ENCODE measurements at regions of chr1 and their contacts with region 1.

Region 1: GRCh38 chr1:160006312-160006940 is 25.4 kb downstream of the PIGM start:
- DNase-seq: peak; percentile 84
- H3K27ac ChIP-seq: no peak overlapping the region
- CTCF ChIP-seq: peak; percentile 94

Region 2: DNA sequence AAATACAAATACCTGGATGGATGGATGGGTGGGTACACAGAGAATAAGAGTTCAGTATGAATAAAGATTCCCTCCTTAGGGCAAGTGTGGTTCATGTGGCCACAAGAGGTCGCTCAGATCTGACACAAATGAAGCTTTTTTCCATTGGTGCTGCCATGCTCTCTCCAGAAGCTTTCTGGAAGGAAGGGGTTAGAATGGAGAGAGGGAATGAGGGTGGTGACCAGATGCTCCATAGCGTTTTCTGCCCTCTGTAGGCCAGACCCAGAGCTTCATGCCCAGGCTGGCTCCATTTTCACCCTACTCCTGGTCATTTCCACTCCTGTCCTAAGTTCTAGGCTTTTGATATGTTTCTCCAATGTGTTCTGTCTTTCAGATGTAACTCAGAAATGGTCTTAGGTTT is 207.5 kb before region 1 on chr1:
- CTCF ChIA-PET with region 1: interaction called, 16 read pairs
- POLR2A ChIA-PET with region 1: no interaction called
- DNase-seq: peak; percentile 69
- H3K27ac ChIP-seq: no peak overlapping the region
- CTCF ChIP-seq: peak; percentile 71

Region 3: GRCh38 chr1:159891275-159892157 is 114.9 kb before region 1 on chr1:
- CTCF ChIA-PET with region 1: interaction called, 46 read pairs
- POLR2A ChIA-PET with region 1: no interaction called
- DNase-seq: peak; percentile 80
- H3K27ac ChIP-seq: peak overlapping the region; percentile 90
- CTCF ChIP-seq: peak; percentile 98

Region 4: DNA sequence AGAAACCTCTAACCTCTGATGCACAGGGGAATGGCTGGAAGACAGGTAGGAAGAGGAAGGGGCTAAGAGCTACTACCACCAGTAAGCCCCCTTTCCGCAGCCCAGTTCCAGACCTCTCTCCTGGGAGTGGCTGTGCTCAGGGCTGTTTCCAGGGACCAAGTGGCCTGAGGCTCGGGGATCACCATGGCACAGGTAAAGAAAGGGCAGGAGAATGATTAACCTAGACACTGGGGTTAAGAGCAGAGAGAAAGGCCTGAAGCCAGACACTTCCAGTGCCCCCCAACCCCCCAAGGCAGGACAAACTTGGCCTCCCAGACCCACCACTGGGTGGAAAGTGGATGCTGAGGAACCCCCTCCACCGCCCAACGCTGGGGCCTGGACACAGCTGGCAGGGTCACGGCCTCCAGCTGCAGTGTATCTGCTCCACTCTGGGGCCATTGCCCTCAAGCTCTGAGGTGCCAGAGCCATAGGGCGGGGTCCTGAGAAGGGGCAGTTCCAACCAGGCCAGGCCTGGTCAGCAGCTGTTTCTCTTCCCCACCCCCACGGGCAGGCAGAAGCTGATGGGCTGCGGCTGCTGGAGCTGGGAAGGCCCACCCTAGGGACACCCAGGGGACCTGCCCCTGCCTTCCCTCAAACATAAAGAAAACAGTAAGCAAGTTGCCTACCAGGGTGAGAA is 83.8 kb before region 1 on chr1:
- CTCF ChIA-PET with region 1: interaction called, 11 read pairs
- POLR2A ChIA-PET with region 1: no interaction called
- DNase-seq: no peak
- H3K27ac ChIP-seq: peak overlapping the region; percentile 99
- CTCF ChIP-seq: no peak

Region 5: DNA sequence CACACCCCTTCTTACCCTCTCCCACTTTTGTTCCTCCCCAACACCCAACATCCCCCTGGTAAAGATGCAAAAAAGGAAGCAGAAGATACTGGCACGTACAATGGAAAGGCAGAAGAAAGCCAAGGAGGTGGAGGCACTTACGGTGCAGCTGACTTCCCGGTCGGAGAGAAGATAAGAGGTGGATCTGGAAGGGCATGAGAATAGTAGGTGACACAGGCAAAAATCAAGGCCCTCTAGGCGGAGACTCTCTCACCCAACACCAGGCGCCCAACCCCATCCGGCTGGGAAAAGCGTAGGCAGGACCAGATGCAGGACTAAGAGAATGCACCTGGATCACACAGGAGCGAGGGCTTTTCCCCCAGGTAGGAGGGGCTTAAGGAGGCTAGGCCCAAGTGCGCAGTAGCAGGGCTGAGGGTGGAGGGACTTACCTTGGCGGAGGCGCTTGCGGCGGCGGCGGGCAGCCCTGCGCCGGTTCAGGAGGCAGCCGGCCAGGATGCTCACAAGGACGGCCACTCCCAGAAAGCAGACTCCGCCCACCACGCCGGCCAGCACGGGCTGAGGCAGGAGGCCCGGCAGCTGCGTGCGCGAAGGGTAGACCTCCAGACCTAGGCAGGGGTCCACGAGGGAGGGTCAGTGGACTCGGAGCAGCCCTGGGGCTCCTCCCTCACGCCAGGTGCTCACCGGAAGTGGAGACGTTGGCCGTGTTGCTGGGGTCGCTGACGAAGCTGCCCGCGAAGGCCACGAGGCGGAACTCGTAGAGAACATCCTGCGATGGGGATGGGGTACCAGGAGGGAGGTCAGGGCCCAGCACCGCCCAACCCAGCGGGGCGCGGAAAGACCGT is 77.0 kb before region 1 on chr1:
- CTCF ChIA-PET with region 1: interaction called, 85 read pairs
- POLR2A ChIA-PET with region 1: no interaction called
- DNase-seq: no peak
- H3K27ac ChIP-seq: peak overlapping the region; percentile 60
- CTCF ChIP-seq: no peak

Region 6: GRCh38 chr1:159936273-159936904 is 70.0 kb before region 1 on chr1:
- CTCF ChIA-PET with region 1: interaction called, 85 read pairs
- POLR2A ChIA-PET with region 1: no interaction called
- DNase-seq: peak; percentile 78
- H3K27ac ChIP-seq: peak overlapping the region; percentile 94
- CTCF ChIP-seq: peak; percentile 95

Region 7: GRCh38 chr1:159945483-159946241 is 60.8 kb before region 1 on chr1 and contains the start of gene IGSF9:
- CTCF ChIA-PET with region 1: interaction called, 18 read pairs
- POLR2A ChIA-PET with region 1: interaction called, 3 read pairs
- DNase-seq: peak; percentile 97
- H3K27ac ChIP-seq: peak within 1 kb of the TSS; percentile 94
- CTCF ChIP-seq: peak; percentile 81

Measured in RWPE1 (cell line).